ENCODE measurements at regions of chr12 and their contacts with region 1.

Region 1: DNA sequence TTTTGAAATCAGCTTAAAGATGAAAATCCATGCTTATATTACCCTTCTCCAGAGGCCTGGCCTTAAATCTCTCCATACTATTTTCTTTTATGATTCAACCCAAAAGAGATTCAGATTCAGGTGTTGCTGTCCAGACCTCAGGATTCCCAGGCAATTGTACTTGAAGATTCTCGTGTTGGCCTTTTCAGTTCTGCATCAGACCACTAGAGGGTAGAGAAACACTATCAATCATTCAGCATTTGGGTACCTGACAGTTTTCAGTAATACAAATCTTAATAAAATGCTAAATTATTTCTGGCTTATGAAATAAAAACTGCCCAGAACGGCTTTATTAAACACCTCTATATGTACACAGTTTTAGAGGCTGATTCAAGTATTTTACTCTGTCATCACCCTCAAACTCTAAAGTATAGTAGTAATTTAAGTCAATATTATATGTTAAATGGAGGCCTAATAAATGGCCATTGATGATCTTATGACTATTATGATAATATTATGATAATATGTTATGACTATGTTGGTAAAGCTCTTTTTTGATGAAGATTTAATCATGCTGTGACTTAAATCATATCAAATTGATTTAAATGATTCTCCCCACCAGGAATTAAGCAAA is 301.1 kb downstream of the DUSP6 start:
- DNase-seq: peak; percentile 35 to 60 (median 51)
- H3K4me3 ChIP-seq: no peak overlapping the region
- H3K4me3 Mint-ChIP-seq: no peak overlapping the region
- H3K27ac ChIP-seq: no peak overlapping the region
- H3K27ac Mint-ChIP-seq: no peak overlapping the region
- H3K4me1 ChIP-seq: no peaks in the 10 kb centered on the region
- H3K4me1 Mint-ChIP-seq: peaks cover 0 to 3% (median 1%) of the 10 kb centered on the region in 4 donors
- H3K27me3 ChIP-seq: no peaks in the 10 kb centered on the region
- H3K27me3 Mint-ChIP-seq: peaks cover 0 to 1% of the 10 kb centered on the region in 2 donors

Region 2: DNA sequence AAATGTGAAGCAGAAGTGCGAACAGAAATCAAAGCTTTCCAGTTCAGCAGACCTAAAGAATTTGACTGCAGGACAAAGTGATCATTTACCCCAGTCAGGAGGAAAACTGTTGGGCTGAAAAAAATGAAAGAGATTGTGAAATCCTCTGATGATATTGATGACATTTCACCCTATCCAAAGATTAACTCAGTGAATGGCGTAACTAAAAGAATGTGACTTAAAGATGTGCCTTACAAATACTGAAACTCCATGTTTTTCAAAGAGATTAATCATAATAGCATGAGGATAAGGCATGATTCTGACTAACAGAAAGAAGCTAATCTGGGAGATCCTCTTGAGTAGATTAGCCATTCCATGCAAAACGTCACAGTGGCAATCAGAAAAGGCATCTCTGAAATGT is 75.5 kb after region 1 on chr12:
- CTCF ChIA-PET with region 1: no interaction called
- POLR2A ChIA-PET with region 1: no interaction called
- intact Hi-C with region 1: no loop called
- DNase-seq: no peak
- H3K4me3 ChIP-seq: no peak overlapping the region
- H3K4me3 Mint-ChIP-seq: no peak overlapping the region
- H3K27ac ChIP-seq: no peak overlapping the region
- H3K27ac Mint-ChIP-seq: no peak overlapping the region
- H3K4me1 ChIP-seq: no peaks in the 10 kb centered on the region
- H3K4me1 Mint-ChIP-seq: no peaks in the 10 kb centered on the region
- H3K27me3 ChIP-seq: no peaks in the 10 kb centered on the region
- H3K27me3 Mint-ChIP-seq: no peaks in the 10 kb centered on the region

Region 3: DNA sequence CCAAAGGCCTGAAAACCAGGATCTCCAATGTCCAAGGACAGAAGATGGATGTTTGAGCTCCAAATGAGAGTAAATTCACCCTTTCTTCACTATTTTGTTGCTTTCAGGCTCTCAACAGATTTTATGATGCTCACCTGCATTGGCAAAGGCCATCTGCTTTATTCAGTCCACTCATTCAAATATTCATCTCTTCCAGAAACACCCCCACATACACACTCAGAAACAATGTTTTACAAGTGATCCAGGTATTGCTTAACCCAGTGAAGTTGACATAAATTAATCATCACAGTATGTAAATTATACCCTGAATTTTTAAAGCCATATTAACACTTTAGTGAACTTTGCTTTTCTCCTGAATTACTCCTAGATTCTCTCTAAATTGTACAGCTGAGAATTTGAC is 237.8 kb after region 1 on chr12:
- CTCF ChIA-PET with region 1: no interaction called
- POLR2A ChIA-PET with region 1: no interaction called
- intact Hi-C with region 1: no loop called
- DNase-seq: no peak
- H3K4me3 ChIP-seq: no peak overlapping the region
- H3K4me3 Mint-ChIP-seq: no peak overlapping the region
- H3K27ac ChIP-seq: no peak overlapping the region
- H3K27ac Mint-ChIP-seq: no peak overlapping the region
- H3K4me1 ChIP-seq: no peaks in the 10 kb centered on the region
- H3K4me1 Mint-ChIP-seq: peaks cover 0 to 5% (median 0%) of the 10 kb centered on the region in 4 donors
- H3K27me3 ChIP-seq: no peaks in the 10 kb centered on the region
- H3K27me3 Mint-ChIP-seq: no peaks in the 10 kb centered on the region

Region 4: DNA sequence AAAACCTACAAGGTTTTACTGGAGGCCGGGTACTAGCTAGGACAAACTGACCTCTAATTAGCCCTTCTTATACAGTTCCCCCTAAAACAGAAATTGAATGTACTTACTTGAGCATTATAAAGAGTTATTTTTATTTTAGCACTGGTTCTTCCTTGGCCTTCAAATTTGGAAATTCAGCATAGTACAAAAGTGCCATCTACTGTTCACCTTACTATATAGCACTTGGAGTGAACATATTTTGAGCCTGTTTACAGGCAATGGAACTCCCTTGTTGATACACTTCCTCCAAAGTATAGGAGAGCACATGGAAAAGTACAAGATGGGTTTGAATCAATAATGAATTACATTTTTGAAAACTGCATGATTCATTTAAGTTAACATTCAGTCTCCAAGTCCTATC is 478.6 kb after region 1 on chr12:
- CTCF ChIA-PET with region 1: interaction called, 6 read pairs
- POLR2A ChIA-PET with region 1: no interaction called
- intact Hi-C with region 1: loop called (anchors 1 kb)
- DNase-seq: peak in 4 of 5 donors; percentile 47 to 57 (median 52)
- H3K4me3 ChIP-seq: no peak overlapping the region
- H3K4me3 Mint-ChIP-seq: no peak overlapping the region
- H3K27ac ChIP-seq: no peak overlapping the region
- H3K27ac Mint-ChIP-seq: peak overlapping the region in 2 of 7 donors; percentile 12 to 81
- H3K4me1 ChIP-seq: peaks cover 11% of the 10 kb centered on the region
- H3K4me1 Mint-ChIP-seq: peaks cover 7 to 23% (median 14%) of the 10 kb centered on the region in 4 donors
- H3K27me3 ChIP-seq: no peaks in the 10 kb centered on the region
- H3K27me3 Mint-ChIP-seq: no peaks in the 10 kb centered on the region